ENCODE measurements at regions of chr1 and their contacts with region 1.

Region 1: GRCh38 chr1:11907275-11908094 is 18.7 kb downstream of the KIAA2013 start:
- DNase-seq: peak; percentile 96
- H3K4me3 ChIP-seq: peak overlapping the region in 2 of 4 experiments; percentile 25 to 61; a peak in 2 of 8 replicates
- H3K27ac ChIP-seq: peak overlapping the region; percentile 100
- H3K4me1 ChIP-seq: peaks cover 0 to 4% (median 1%) of the 10 kb centered on the region in 4 experiments; a peak in 3 of 7 replicates
- H3K27me3 ChIP-seq: no peaks in the 10 kb centered on the region
- CTCF ChIP-seq: peak; percentile 74 to 89 (median 75)
- EP300 ChIP-seq: no peak
- POLR2A ChIP-seq: no peak
- RAD21 ChIP-seq: peak; percentile 63 to 64

Region 2: DNA sequence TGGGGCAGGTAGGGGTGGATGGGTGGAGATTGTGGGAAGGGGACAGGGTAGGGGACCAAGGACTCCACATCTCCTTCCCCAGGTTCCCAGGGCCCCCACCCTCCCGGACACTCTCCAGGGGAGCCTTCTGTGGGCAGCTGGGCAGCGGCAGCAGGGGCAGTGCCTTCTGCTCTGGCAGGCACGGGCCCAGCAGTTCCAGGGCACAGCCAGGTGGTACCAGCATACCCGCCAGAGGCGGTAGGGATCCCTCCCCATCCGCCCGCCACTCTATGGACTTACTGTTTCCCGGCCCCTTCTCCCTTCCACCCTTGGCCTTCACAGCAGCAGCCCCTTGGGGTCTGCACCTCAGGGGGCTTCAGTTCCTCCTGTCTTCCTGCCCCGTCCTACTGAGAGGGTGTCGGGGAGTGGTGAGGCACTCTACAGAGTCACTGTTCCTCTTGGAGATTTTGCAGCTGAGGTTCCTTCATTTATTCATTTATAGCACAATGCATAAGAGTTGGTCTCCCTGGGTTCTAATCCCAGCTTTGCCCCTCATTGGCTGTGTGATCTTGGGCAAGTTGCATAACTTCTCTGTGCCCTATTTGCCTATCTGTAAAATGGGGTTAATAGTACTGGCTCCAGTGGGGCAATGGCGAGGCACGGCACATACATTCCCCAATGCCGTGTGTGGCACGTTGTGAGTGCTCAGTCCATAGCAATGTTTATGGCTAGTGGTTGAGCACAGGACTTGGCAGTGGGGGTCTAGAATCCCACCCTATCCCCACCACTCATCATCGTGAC is 128.5 kb before region 1 on chr1:
- CTCF ChIA-PET with region 1: no interaction called
- POLR2A ChIA-PET with region 1: no interaction called
- DNase-seq: no peak
- H3K4me3 ChIP-seq: no peak overlapping the region
- H3K27ac ChIP-seq: no peak overlapping the region
- H3K4me1 ChIP-seq: peaks cover 0 to under 1% (median 0%) of the 10 kb centered on the region in 4 experiments; a peak in 2 of 7 replicates
- H3K27me3 ChIP-seq: no peaks in the 10 kb centered on the region
- CTCF ChIP-seq: no peak
- EP300 ChIP-seq: no peak
- POLR2A ChIP-seq: no peak
- RAD21 ChIP-seq: no peak

Region 3: DNA sequence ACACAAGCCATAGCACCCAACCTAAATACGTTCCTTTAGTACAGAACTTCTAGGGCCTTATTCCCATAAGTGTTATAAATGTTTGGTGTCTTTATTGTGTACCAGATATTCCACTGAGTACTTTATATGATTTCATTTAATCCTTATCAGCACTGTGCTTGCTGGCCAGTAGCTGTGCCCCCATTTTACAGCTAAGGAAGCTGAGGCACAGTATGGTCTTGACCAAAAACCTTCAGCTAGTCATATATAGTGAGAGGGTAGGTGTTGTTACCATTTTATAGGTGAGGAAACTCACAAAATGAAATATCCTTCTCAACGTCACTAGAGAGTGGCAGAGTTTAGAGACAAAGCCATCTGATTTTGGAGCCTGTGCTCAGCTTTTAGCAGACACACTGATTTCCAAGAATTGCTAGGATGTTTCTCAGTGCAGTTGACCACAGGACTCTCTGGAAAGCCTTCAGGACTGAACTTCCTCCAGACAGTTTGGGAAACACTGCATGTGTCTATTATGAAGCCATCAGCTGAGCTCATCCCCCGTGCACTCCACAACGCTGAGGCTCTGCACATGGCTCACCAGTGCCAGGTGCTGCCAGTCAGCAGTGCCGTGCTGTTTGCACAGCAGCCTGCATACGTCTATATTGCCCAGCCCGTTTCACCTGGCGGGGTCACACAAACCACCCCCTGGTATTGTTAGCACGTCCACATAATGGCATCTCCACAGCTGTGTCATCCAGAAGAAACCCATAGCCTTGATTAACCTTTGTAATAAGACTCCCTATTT is 75.3 kb before region 1 on chr1:
- CTCF ChIA-PET with region 1: interaction called, 5 read pairs
- POLR2A ChIA-PET with region 1: interaction called, 72 read pairs
- DNase-seq: no peak
- H3K4me3 ChIP-seq: no peak overlapping the region
- H3K27ac ChIP-seq: no peak overlapping the region
- H3K4me1 ChIP-seq: no peaks in the 10 kb centered on the region
- H3K27me3 ChIP-seq: no peaks in the 10 kb centered on the region
- CTCF ChIP-seq: no peak
- EP300 ChIP-seq: no peak
- POLR2A ChIP-seq: no peak
- RAD21 ChIP-seq: no peak

Region 4: DNA sequence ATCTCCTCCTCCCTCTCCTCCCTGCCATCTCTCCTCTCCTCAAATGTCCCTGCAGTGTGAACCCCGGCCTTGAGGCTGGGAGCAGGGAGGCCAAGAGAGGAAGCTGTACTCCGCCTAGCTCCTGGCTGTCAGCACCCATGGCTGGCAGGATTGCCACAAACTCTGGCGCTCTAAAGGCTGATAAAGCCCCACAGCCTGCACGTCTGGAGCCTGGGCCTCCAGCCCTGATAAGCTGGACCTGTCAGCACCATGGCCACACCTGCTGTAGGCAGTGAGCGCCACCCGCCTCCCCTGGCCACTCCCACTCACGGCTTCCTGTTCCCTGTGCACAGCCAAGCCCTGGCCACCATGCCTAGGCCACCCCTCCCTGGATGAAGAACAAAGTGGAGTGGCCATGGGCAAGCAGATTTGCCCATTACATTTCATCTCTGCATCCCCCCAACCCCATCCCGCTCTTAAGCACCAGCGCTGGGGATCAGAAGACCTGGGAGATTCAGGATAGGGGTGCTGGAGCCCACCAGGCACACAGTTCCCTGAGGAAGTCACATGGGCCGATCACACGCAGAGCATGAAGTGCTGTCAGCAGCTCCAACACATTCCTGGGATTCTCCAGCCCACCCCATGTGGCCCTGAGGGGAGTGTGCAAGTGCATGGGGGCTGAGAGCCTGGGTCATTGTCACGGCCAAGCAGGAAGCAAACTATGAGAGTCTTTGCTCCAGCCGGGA is 24.5 kb before region 1 on chr1:
- CTCF ChIA-PET with region 1: interaction called, 7 read pairs
- POLR2A ChIA-PET with region 1: interaction called, 109 read pairs
- DNase-seq: no peak
- H3K4me3 ChIP-seq: no peak overlapping the region
- H3K27ac ChIP-seq: no peak overlapping the region
- H3K4me1 ChIP-seq: peaks cover 0 to 10% (median 8%) of the 10 kb centered on the region in 4 experiments; a peak in 6 of 7 replicates
- H3K27me3 ChIP-seq: no peaks in the 10 kb centered on the region
- CTCF ChIP-seq: no peak
- EP300 ChIP-seq: no peak
- POLR2A ChIP-seq: no peak
- RAD21 ChIP-seq: no peak

Region 5: GRCh38 chr1:11940260-11940921 is 32.9 kb after region 1 on chr1:
- CTCF ChIA-PET with region 1: interaction called, 4 read pairs
- POLR2A ChIA-PET with region 1: interaction called, 263 read pairs
- DNase-seq: no peak
- H3K4me3 ChIP-seq: no peak overlapping the region
- H3K27ac ChIP-seq: no peak overlapping the region
- H3K4me1 ChIP-seq: peaks cover 2 to 19% (median 13%) of the 10 kb centered on the region in 4 experiments
- H3K27me3 ChIP-seq: no peaks in the 10 kb centered on the region
- CTCF ChIP-seq: no peak
- EP300 ChIP-seq: no peak
- POLR2A ChIP-seq: no peak
- RAD21 ChIP-seq: no peak

Region 6: GRCh38 chr1:11990303-11991032 is 83.0 kb after region 1 on chr1:
- CTCF ChIA-PET with region 1: interaction called, 4 read pairs
- POLR2A ChIA-PET with region 1: interaction called, 144 read pairs
- DNase-seq: no peak
- H3K4me3 ChIP-seq: no peak overlapping the region
- H3K27ac ChIP-seq: no peak overlapping the region
- H3K4me1 ChIP-seq: no peaks in the 10 kb centered on the region
- H3K27me3 ChIP-seq: no peaks in the 10 kb centered on the region
- CTCF ChIP-seq: no peak
- EP300 ChIP-seq: no peak
- POLR2A ChIP-seq: no peak
- RAD21 ChIP-seq: no peak

Region 7: DNA sequence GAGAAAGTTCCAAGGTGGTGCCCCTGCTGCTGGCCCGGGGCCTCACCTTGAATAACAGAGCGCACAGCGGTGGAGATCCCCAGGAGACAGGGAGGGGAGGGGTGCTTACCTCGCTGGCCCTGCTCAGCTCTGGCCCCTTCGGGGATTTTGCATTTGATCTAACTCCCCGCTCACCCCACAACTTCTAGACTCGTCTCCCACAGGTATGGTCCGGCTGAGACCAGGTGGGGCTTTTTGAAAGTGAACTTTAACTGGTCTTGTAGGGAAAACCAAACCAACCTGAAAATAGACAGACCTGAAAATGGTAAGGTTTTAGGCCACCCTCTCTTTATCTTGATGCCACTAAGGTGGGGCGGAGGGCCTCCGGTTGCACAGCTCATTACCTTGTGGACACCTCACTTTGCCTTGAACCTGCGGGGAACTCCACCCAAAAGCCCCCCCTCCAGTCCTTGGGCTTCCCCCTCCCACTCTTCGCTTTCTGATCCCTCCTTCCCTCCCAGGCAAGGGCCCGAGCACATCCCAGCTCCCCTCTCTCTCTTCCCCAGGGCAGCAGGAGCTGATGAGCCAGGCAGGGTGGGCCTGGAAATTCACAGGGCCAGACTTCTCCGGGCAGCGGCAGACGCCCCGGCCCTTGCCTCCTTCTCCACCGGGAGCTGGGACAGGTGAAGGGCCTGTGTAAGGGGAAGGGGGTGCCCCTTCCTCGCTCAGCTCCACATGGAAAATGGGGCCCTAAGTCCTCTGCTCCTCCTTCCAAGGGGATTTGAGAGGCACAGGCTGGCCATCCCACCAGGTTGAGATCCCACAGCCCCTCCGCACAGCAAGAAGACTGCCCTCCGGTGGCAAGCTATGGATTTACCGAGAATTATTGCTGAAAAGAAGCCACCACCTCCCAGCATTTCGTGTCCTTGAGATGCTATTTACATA is 171.7 kb after region 1 on chr1:
- CTCF ChIA-PET with region 1: no interaction called
- POLR2A ChIA-PET with region 1: interaction called, 12 read pairs
- DNase-seq: peak in 1 of 2 experiments; percentile 86
- H3K4me3 ChIP-seq: peak overlapping the region in 3 of 4 experiments; percentile 18 to 44 (median 34); a peak in 5 of 8 replicates
- H3K27ac ChIP-seq: no peak overlapping the region; the same call in 1 of the 2 replicates
- H3K4me1 ChIP-seq: peaks cover 3 to 22% (median 6%) of the 10 kb centered on the region in 4 experiments
- H3K27me3 ChIP-seq: no peaks in the 10 kb centered on the region
- CTCF ChIP-seq: peak; percentile 73 to 90 (median 80)
- EP300 ChIP-seq: no peak
- POLR2A ChIP-seq: peak in 1 of 2 experiments; percentile 33; a peak in 2 of 3 replicates
- RAD21 ChIP-seq: peak; percentile 57 to 70

Measured in H1 (cell line).